ENCODE measurements at regions of chr22 and their contacts with region 1.

Region 1: DNA sequence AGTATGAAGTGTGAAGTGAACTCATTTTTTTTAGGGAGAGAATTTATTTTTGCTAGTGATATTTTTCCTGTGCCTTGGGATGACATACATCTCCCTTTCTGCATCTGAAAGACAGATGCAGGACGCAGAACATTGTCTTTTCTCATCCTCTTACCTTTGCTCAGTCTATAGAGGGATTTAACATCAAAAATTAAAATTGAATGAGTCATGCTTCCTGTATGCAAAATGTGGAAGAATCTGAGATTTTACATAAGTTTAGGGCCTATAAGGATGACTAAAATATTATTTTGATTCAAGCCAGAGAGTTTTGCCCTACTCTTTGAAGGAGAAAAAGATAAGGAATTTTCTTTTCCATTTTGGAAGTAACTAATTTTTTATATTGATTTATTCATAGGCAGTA is 27.3 kb downstream of the XRCC6 start:
- DNase-seq: no peak
- ATAC-seq: no peak
- H3K4me3 Mint-ChIP-seq: no peak overlapping the region
- H3K27ac Mint-ChIP-seq: peak overlapping the region; percentile 51
- H3K4me1 Mint-ChIP-seq: peaks cover 13% of the 10 kb centered on the region
- H3K27me3 Mint-ChIP-seq: no peaks in the 10 kb centered on the region

Region 2: GRCh38 chr22:41636467-41636866 is 12.0 kb before region 1 on chr22:
- CTCF ChIA-PET with region 1: interaction called, 3 read pairs
- POLR2A ChIA-PET with region 1: interaction called, 11 read pairs
- intact Hi-C with region 1: no loop called
- DNase-seq: no peak
- ATAC-seq: no peak
- H3K4me3 Mint-ChIP-seq: no peak overlapping the region
- H3K27ac Mint-ChIP-seq: no peak overlapping the region
- H3K4me1 Mint-ChIP-seq: no peaks in the 10 kb centered on the region
- H3K27me3 Mint-ChIP-seq: no peaks in the 10 kb centered on the region